Dendritic cell treated with granulocyte-macrophage colony-stimulating factor and Interleukin-4, amounts not matched to agents 40 ng/mL and 50 ng/mL, for 4 days (primary cell): ENCODE measurements at regions of chr9 and their contacts with region 1.

Region 1: GRCh38 chr9:281741-282645 is 67.3 kb downstream of the DOCK8 start:
- H3K4me3 Mint-ChIP-seq: no peak overlapping the region
- H3K27ac Mint-ChIP-seq: peak overlapping the region; percentile 81
- H3K4me1 Mint-ChIP-seq: peaks cover 38% of the 10 kb centered on the region
- H3K27me3 Mint-ChIP-seq: no peaks in the 10 kb centered on the region

Region 2: GRCh38 chr9:297104-297972 is 15.3 kb after region 1 on chr9:
- intact Hi-C with region 1: loop called (anchors 2 kb)
- H3K4me3 Mint-ChIP-seq: peak overlapping the region; percentile 55
- H3K27ac Mint-ChIP-seq: peak overlapping the region; percentile 83
- H3K4me1 Mint-ChIP-seq: peaks cover 34% of the 10 kb centered on the region
- H3K27me3 Mint-ChIP-seq: no peaks in the 10 kb centered on the region

Region 3: GRCh38 chr9:336039-336438 is 54.0 kb after region 1 on chr9:
- intact Hi-C with region 1: no loop called
- H3K4me3 Mint-ChIP-seq: no peak overlapping the region
- H3K27ac Mint-ChIP-seq: no peak overlapping the region
- H3K4me1 Mint-ChIP-seq: no peaks in the 10 kb centered on the region
- H3K27me3 Mint-ChIP-seq: no peaks in the 10 kb centered on the region

Region 4: GRCh38 chr9:459491-460444 is 177.8 kb after region 1 on chr9:
- intact Hi-C with region 1: no loop called
- H3K4me3 Mint-ChIP-seq: no peak overlapping the region
- H3K27ac Mint-ChIP-seq: no peak overlapping the region
- H3K4me1 Mint-ChIP-seq: no peaks in the 10 kb centered on the region
- H3K27me3 Mint-ChIP-seq: no peaks in the 10 kb centered on the region